H1 (cell line): ENCODE measurements at regions of chr17 and their contacts with region 1.

Region 1: DNA sequence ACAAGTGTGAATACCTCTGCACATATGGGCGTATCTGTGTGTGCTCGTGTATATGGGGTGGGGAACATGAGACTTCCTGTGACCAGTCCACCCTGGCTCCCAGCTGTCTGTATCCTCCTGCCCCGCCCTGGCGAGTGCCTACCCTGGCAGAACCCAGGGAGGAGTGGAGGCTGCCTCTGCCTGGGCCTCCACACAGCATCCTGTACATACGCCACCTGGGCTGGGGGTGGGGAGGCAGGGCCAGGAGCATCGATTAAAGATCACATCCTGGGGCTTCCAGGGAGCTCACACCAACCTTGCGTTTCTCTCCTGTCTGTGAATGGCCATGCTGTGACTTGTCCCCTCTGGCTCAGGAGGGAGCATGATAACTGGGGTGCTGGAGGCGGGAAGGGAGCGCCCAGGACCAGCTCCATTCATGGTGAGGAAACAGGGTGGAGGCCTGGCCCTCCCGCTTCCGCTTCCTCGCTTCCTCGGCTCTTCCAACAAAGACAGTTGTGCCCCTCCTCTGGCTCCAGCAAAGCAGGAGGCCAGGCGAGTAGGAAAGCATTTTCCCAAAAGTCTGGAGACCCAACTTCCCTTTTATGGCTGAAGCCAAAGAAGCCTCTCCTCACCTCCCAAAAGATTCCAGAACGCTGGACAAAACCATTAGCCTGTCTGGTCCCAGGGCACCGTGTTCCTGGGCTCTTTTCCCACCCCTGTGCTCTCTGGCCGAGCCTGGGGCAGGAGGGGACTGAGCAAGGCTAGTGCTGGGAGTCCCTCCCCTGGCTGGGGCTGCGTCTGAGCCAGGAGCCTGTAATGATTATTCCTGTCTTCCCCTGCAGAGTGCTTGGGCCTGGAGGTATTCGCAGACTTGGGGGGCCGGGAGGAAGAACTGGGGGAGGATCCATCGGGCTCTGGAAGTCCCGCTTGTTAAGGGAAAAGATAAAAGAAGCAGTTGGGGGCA is 23.0 kb downstream of the ADAM11 start:
- DNase-seq: no peak
- H3K4me3 ChIP-seq: no peak overlapping the region
- H3K27ac ChIP-seq: no peak overlapping the region
- H3K4me1 ChIP-seq: peaks cover 0 to 23% (median 17%) of the 10 kb centered on the region in 4 experiments; a peak in 6 of 7 replicates
- H3K27me3 ChIP-seq: peaks cover 0 to 9% (median 5%) of the 10 kb centered on the region in 4 experiments; a peak in 5 of 7 replicates
- CTCF ChIP-seq: no peak
- EP300 ChIP-seq: no peak
- POLR2A ChIP-seq: no peak
- RAD21 ChIP-seq: no peak

Region 2: DNA sequence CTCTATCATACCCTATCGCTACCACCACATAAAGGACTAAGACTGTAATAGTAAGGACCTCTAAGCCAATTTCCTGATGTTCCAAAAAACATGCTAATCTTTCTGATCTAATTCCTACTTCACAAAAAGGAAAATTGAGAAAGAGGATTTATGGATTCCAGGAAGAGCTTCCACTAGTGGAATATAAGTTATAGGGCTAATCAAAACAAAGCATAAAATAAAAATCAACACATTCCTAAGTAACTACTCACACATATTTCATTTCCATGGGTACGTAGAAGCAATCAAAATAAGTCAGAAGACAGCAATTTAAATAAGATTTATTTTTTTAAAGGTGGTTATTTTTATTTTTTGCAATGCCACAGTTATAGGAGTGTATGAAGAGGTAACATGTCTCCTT is 104.7 kb before region 1 on chr17:
- CTCF ChIA-PET with region 1: no interaction called
- POLR2A ChIA-PET with region 1: no interaction called
- DNase-seq: no peak
- H3K4me3 ChIP-seq: no peak overlapping the region
- H3K27ac ChIP-seq: no peak overlapping the region
- H3K4me1 ChIP-seq: no peaks in the 10 kb centered on the region
- H3K27me3 ChIP-seq: no peaks in the 10 kb centered on the region
- CTCF ChIP-seq: no peak
- EP300 ChIP-seq: no peak
- POLR2A ChIP-seq: no peak
- RAD21 ChIP-seq: no peak

Region 3: DNA sequence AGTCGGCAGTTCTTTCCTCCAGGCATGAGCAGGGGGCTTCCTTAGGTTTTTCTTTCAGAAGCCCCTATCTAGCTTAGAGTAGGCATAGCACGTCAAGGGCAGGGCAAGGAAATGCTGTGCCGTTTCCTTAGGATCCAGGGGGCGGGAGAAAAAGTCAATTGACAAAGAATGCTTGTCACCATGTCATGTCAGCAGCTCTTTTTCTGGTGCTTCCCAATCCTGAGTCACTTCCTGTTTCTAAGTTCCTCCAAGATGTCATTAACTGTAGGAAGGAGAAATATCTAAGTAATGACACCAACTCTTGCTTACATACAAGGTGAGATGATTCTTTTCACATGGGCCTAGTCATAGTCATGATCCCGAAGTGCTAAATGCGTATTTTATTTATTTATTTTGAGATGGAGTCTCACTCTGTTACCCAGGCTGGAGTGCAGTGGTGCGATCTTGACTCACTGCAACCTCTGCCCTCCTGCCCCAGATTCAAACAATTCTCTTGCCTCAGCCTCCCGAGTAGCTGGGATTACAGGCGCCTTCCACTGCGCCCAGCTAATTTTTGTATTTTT is 13.1 kb after region 1 on chr17:
- CTCF ChIA-PET with region 1: interaction called, 22 read pairs
- POLR2A ChIA-PET with region 1: interaction called, 17 read pairs
- DNase-seq: no peak
- H3K4me3 ChIP-seq: no peak overlapping the region
- H3K27ac ChIP-seq: no peak overlapping the region
- H3K4me1 ChIP-seq: peaks cover 0 to 3% (median 1%) of the 10 kb centered on the region in 4 experiments; a peak in 2 of 7 replicates
- H3K27me3 ChIP-seq: no peaks in the 10 kb centered on the region
- CTCF ChIP-seq: no peak
- EP300 ChIP-seq: no peak
- POLR2A ChIP-seq: no peak
- RAD21 ChIP-seq: no peak